Activated CD8-positive, alpha-beta T cell treated with anti-CD3 and anti-CD28 coated beads, Interleukin-2, amount 10 ng/mL, durations not matched to agents 7 days and 5 days (primary cell): ENCODE measurements at regions of chr1 and their contacts with region 1.

Region 1: DNA sequence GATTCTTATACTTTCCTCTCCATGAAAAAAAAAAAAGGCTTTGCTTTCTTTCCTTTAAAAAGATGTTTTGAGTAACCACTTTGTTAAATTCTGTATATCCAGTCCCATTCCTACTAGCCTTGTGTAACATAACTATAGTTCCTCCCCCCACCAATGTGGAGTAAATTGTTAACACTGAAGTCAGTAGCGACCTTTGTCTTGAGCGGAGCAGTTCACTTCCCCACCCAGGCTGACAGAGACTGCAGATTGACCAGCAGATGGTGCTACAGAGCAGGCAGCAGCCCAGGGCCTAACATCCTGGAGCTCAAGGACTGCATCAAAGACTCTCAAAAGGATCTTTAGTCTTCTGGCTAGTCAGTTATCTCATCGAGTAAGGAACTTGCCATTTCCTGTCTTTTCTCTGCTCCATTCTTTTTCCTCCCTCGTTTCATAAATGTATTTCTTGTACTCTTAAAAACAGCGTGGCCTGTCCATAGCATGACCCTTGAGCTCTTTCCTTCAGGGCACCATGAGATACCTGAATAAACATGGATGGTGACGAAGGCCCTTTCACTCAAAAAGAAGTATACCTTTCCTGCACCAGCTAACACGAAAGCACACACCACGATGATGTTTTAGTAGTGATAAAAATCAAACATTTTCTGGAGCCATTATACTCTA is 503.5 kb upstream of the PKN2 start:
- DNase-seq: peak; percentile 69
- ATAC-seq: peak; percentile 87
- H3K4me3 Mint-ChIP-seq: no peak overlapping the region
- H3K27ac Mint-ChIP-seq: no peak overlapping the region
- H3K4me1 Mint-ChIP-seq: no peaks in the 10 kb centered on the region
- H3K27me3 Mint-ChIP-seq: peaks cover 2% of the 10 kb centered on the region

Region 2: DNA sequence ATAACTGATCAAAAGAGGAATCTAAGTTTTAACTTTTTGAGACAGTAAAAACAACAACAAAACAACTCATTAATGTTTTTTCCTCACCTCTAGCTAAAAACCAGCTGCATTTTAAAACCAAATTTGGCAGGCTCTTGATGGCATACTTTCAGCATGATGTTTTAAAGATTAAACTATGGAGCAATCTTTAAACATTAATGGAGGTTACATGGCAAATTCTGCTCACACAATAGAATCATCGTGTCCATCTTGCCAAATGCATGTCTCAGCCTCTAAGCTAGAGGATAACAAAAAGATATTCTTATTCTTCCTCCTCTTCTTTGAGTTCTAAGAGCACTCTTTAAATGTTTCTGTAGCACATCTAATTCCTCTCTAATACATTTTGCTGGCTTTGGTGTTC is 76.3 kb before region 1 on chr1:
- CTCF ChIA-PET with region 1: no interaction called
- POLR2A ChIA-PET with region 1: no interaction called
- DNase-seq: no peak
- ATAC-seq: no peak
- H3K4me3 Mint-ChIP-seq: no peak overlapping the region
- H3K27ac Mint-ChIP-seq: no peak overlapping the region
- H3K4me1 Mint-ChIP-seq: no peaks in the 10 kb centered on the region
- H3K27me3 Mint-ChIP-seq: no peaks in the 10 kb centered on the region

Region 3: GRCh38 chr1:88169939-88170338 is 10.6 kb before region 1 on chr1:
- CTCF ChIA-PET with region 1: interaction called, 10 read pairs
- POLR2A ChIA-PET with region 1: no interaction called
- DNase-seq: no peak
- ATAC-seq: no peak
- H3K4me3 Mint-ChIP-seq: no peak overlapping the region
- H3K27ac Mint-ChIP-seq: no peak overlapping the region
- H3K4me1 Mint-ChIP-seq: no peaks in the 10 kb centered on the region
- H3K27me3 Mint-ChIP-seq: peaks cover 4% of the 10 kb centered on the region

Region 4: DNA sequence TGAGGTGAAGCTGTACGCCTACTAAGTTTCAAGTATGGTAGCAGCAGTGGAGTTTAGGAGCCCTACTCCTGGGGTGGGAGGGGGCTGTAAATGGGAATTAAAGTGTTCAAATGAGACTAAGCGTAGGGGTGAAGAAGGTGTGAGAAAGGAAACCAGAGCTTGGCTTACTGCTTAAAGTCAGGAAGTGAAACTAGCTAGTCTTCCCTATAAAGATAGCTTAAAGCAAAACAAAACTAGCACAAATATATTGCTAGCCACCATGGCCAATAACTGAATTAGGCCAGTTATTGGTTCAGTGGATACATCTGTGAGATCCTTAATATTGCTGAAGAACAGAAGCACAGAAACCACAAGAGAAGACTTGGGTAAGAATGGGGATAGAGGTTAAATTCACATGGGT is 11.3 kb after region 1 on chr1:
- CTCF ChIA-PET with region 1: interaction called, 10 read pairs
- POLR2A ChIA-PET with region 1: no interaction called
- DNase-seq: no peak
- ATAC-seq: no peak
- H3K4me3 Mint-ChIP-seq: no peak overlapping the region
- H3K27ac Mint-ChIP-seq: no peak overlapping the region
- H3K4me1 Mint-ChIP-seq: peaks cover 7% of the 10 kb centered on the region
- H3K27me3 Mint-ChIP-seq: peaks cover 7% of the 10 kb centered on the region

Region 5: DNA sequence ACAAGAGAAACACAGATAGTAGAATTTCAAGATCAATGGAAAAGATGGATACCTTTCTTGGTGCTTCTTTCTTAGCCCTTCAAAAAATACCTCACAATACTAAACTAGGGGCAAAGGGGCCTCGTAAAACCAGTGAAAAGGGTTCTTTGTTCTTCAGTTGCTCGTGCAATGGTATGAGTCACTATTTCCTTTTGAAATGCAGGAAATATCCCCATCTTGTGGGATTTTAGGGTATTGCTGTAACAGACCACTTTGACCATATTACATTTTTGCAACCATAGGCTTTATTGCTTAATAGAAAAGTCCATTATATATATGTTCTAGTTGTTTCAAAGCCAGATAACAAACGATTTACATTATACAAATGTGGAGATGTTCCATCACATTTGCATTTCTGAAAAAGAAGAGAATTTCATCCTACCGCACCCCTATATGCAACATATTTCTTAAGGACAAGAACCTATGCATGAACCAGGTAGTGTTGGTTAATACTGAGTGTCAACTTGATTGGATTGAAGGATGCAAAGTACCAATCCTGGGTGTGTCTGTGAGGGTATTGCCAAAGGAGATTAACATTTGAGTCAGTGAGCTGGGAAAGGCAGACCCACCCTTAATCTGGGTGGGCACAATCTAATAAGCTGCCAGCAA is 414.9 kb after region 1 on chr1:
- CTCF ChIA-PET with region 1: interaction called, 11 read pairs
- POLR2A ChIA-PET with region 1: no interaction called
- DNase-seq: no peak
- ATAC-seq: no peak
- H3K4me3 Mint-ChIP-seq: no peak overlapping the region
- H3K27ac Mint-ChIP-seq: no peak overlapping the region
- H3K4me1 Mint-ChIP-seq: no peaks in the 10 kb centered on the region
- H3K27me3 Mint-ChIP-seq: peaks cover 5% of the 10 kb centered on the region